Breast epithelium (tissue), 4 donors: ENCODE measurements at regions of chr1 and their contacts with region 1.

Region 1: DNA sequence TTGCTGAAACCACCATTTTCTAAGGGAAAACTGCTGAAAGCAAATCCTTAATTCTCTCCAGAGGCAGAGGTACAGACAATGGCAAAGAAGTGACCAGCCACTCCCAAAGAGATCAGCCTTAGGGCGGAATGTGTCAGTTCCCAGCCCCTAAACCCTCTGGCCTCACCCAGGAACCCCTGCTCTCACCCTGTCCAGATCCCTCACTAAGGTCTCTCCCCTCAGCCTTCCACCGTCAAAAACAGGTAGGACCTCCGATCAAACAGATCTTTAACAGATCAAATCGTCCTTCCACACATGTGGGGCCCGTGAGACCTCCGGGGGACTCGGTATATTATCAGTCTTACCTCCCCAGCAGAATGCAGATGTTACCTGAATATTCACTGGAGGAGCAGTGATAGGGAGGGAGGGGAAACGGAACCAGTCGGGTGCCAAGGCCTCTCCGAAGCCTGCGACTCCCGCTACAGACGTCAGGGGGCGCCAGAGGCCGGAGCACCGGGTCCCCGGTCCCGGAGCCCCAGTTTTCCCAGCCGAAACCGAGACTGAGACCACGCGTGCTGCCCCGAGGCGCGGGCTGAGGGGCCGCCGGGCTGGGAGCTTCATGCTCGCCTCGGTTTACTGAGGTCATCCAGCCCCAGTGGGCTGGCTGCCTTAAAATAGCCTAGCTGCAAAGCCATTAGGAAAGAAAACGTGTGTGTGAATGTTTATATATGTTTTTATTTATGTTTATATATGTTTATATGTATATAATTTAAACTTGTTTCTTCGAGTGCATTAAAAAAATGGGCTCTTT is 23.6 kb downstream of the GPA33 start:
- DNase-seq: peak; percentile 44 to 76
- H3K4me3 ChIP-seq: peak overlapping the region in 2 of 3 donors; percentile 25 to 52
- H3K27ac ChIP-seq: no peak overlapping the region
- H3K4me1 ChIP-seq: no peaks in the 10 kb centered on the region
- H3K27me3 ChIP-seq: no peaks in the 10 kb centered on the region
- CTCF ChIP-seq: peak; percentile 33 to 93 (median 92)
- POLR2A ChIP-seq: no peak

Region 2: GRCh38 chr1:167442124-167442848 is 375.8 kb after region 1 on chr1:
- intact Hi-C with region 1: loop called (anchors 10 kb)
- DNase-seq: peak; percentile 67 to 79
- H3K4me3 ChIP-seq: no peak overlapping the region
- H3K27ac ChIP-seq: no peak overlapping the region
- H3K4me1 ChIP-seq: no peaks in the 10 kb centered on the region
- H3K27me3 ChIP-seq: peaks cover 0 to 7% of the 10 kb centered on the region in 2 donors
- CTCF ChIP-seq: peak; percentile 26 to 84 (median 75)
- POLR2A ChIP-seq: no peak

Region 3: DNA sequence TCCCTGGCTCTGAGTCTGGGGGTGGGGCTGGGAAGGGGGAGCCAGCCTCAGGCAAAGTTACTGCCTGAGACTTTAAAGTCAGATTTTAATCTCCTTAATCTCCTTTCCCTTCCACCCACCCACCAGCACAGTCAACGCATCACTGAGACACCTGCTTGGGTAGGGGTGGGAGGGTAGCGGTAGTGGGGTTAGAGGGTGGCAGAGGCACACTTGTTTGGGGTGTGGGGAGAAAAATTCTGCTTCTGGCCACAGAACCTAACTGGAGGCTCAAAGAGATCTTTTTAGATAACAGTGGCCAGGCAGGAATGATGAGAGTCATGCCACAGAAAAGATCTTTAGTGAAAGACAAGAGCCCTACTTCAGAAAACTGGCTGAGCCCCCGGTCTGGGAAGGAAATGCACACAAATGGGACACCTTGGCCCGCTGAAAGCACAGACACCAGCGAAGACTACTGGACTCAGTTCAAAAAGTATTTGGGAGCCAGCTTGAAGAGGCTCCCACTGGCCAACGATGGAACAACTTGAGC is 407.7 kb after region 1 on chr1:
- intact Hi-C with region 1: no loop called
- DNase-seq: peak in 1 of 2 donors; percentile 30
- H3K4me3 ChIP-seq: no peak overlapping the region
- H3K27ac ChIP-seq: no peak overlapping the region
- H3K4me1 ChIP-seq: no peaks in the 10 kb centered on the region
- H3K27me3 ChIP-seq: no peaks in the 10 kb centered on the region
- CTCF ChIP-seq: no peak
- POLR2A ChIP-seq: no peak